ENCODE measurements at regions of chr19 and their contacts with region 1.

Region 1: DNA sequence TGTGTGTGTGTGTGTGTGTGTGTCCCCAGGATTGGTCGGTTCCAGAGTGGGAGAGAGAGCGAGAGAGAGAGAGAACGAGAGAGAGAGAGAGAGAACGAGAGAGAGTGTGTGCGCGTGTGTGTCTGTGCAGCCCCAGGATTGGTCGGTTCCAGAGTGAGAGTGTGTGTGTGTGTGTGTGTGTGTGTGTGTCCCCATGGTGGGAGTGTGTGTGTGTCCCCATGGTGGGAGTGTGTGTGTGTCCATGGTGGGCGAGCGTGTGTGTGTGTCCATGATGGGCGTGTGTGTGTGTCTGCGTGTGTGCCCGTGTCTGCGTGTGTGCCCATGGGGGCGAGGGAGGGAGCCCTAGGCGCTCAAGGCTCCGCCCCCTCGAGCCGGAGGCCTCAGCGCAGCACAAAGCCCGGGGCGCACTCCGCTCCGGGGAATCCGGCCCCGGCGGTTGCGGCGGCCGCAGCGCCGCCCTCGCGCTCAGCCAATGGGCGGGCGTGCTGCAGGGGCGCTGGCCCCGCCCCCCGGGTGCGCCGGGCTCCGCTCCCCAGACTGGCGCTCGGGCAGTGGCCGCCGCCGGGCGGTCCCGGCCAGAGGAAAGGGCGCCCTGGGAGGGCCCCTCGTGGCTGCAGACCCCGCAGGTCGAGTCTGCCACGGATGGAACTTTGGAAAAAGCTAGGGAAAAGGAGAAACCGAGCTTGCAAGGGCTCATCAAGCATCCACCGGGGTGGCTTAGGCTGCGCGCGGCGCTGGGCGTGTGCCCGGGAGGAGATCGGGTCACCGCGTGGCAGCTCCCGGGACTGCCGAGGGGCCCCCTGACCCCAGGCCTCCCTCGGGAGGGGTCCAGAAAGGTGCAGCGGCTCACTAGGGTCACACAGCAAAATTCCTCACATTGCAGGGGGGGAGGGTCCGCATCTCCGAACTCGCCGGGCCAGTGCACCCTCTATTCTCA is 96.2 kb downstream of the INSR start:
- DNase-seq: peak; percentile 42
- H3K4me3 ChIP-seq: peak overlapping the region; percentile 39 to 74 (median 68)
- H3K27ac ChIP-seq: peak overlapping the region; percentile 77 to 94 (median 85)
- H3K4me1 ChIP-seq: peaks cover 5 to 23% (median 16%) of the 10 kb centered on the region in 3 donors
- H3K27me3 ChIP-seq: peaks cover 0 to 6% (median 0%) of the 10 kb centered on the region in 4 donors
- CTCF ChIP-seq: peak in 3 of 6 experiments; percentile 9 to 44 (median 18)
- POLR2A ChIP-seq: peak in 1 of 4 donors; percentile 67

Region 2: GRCh38 chr19:7293795-7294570 is 96.0 kb after region 1 on chr19 and contains the start of gene INSR:
- intact Hi-C with region 1: loop called (anchors 2 kb)
- DNase-seq: peak; percentile 9
- H3K4me3 ChIP-seq: peak within 1 kb of the TSS; percentile 72 to 93 (median 79)
- H3K27ac ChIP-seq: peak within 1 kb of the TSS; percentile 77 to 90 (median 84)
- H3K4me1 ChIP-seq: peaks cover 12 to 44% (median 13%) of the 10 kb centered on the region in 3 donors
- H3K27me3 ChIP-seq: peaks cover 0 to 88% (median 0%) of the 10 kb centered on the region in 4 donors
- CTCF ChIP-seq: no peak
- POLR2A ChIP-seq: peak in 2 of 4 donors; percentile 45 to 61
- total RNA-seq, gene INSR: 4.9 to 33.4 (median 10.8) TPM